Mammary epithelial cell (primary cell): ENCODE measurements at regions of chr1 and their contacts with region 1.

Region 1: GRCh38 chr1:234114648-234115307 is 210.3 kb downstream of the SLC35F3 start:
- DNase-seq: peak; percentile 61
- H3K4me3 ChIP-seq: peak overlapping the region; percentile 28 to 40 (median 33)
- H3K27ac ChIP-seq: peak overlapping the region; percentile 56
- H3K4me1 ChIP-seq: peaks cover 8% of the 10 kb centered on the region
- H3K27me3 ChIP-seq: no peaks in the 10 kb centered on the region
- CTCF ChIP-seq: peak; percentile 67

Region 2: DNA sequence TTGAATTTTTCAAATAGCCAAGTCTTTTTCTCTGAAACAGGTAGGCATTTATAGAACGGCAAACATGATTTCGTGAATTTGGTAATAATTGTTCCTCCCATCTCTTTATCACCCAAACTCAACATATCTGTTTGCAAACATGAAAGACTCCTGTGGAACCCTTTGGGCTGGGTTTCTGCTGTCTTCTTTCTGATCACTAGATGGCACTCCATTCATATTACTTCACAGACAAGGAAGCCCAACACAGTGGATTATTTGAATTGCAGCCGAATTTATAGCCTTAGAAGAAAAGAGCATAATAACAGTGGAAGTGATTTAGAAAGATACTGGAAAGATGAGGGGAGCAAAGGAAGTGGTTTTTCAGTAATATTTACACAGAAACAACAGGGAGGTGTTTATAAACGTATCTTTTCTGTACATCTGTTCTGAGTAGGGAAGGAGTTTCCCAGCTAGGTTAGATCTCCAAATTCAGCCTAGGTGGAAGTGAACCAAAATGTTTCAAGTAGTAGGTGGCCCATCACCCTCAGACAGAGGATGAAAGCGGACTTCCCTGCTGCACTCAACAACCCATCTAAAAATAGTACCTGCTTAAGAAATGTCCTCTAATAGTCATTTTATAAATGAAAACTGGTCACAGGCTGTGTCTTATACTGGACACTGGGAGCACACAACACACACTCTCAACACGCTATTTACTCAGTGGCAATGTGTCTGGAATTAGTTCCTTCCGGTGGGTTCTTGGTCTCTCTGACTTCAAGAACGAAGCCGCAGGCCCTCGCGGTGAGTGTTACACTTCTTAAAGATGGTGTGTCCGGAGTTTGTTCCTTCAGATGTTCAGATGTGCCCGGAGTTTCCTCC is 719.7 kb before region 1 on chr1:
- CTCF ChIA-PET with region 1: no interaction called
- dilution Hi-C with region 1: no loop called
- in situ Hi-C with region 1: no loop called
- intact Hi-C with region 1: loop called (anchors 1 kb)
- DNase-seq: peak; percentile 43
- H3K4me3 ChIP-seq: no peak overlapping the region
- H3K27ac ChIP-seq: no peak overlapping the region
- H3K4me1 ChIP-seq: no peaks in the 10 kb centered on the region
- H3K27me3 ChIP-seq: peaks cover 1% of the 10 kb centered on the region
- CTCF ChIP-seq: peak; percentile 83 to 89

Region 3: GRCh38 chr1:233982827-233983518 is 131.8 kb before region 1 on chr1:
- CTCF ChIA-PET with region 1: no interaction called
- dilution Hi-C with region 1: no loop called
- in situ Hi-C with region 1: no loop called
- intact Hi-C with region 1: no loop called
- DNase-seq: peak; percentile 69
- H3K4me3 ChIP-seq: no peak overlapping the region
- H3K27ac ChIP-seq: no peak overlapping the region
- H3K4me1 ChIP-seq: peaks cover 5% of the 10 kb centered on the region
- H3K27me3 ChIP-seq: no peaks in the 10 kb centered on the region
- CTCF ChIP-seq: no peak

Region 4: DNA sequence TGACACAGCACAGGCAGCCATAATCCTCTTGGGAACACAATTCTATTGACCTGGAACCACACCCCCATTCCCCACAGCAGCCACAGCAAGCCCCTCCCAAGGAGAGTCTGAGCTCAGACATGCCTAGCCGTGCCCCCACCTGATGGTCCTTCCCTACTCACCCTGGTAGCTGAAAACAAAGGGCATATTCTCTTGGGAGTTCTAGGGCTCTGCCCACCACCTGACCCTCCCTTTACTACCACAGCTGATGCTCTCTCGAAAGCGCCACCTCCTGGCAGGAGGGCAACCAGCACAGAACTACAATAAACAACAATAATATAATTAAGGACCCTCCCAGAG is 73.6 kb after region 1 on chr1:
- CTCF ChIA-PET with region 1: no interaction called
- dilution Hi-C with region 1: no loop called
- in situ Hi-C with region 1: no loop called
- intact Hi-C with region 1: loop called (anchors 1 kb)
- DNase-seq: peak; percentile 98
- H3K4me3 ChIP-seq: no peak overlapping the region
- H3K27ac ChIP-seq: peak overlapping the region; percentile 75
- H3K4me1 ChIP-seq: peaks cover 38% of the 10 kb centered on the region
- H3K27me3 ChIP-seq: no peaks in the 10 kb centered on the region
- CTCF ChIP-seq: peak; percentile 35 to 48

Region 5: DNA sequence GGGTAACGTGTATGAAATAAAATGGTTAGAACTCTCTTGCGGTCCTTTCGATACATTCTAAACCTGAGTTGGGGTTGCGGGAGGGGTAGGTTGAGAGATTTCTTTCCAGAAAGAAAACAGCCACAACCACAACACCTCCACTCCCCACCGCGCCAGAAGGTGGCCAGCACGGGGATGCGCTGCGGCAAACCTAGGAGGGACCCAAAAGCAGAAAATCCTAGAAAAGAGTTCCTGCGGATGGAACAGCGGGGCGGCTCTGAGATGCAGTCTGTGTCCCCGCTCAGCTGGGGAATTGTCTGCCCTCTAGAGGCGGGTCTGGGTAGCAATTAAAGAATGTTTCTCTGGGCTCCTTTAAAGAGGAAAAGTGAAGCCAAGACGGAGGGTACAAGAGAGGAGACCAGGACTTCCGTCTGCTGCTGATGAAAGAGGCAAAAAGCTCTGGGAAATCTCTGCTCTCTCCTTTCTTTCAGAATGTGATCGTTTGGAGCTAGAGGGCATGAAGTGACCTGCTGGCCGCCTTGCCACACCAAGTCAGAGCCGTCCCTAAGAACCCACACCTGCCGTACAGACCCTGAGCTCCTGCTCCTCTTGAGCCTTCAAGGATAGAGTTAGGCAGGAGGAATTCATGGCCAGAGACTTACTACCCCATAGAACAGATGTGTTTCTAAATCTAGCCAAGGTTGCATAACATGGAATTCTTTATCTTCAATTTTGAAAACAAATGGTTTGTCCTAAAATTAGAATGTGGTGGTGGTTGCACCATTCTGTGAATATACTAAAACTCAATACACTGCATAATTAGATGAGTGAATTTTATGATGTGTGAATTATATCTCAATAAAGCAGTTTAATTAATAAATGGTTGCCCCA is 212.0 kb after region 1 on chr1:
- CTCF ChIA-PET with region 1: interaction called, 7 read pairs
- dilution Hi-C with region 1: no loop called
- in situ Hi-C with region 1: no loop called
- intact Hi-C with region 1: loop called (anchors 1 kb)
- DNase-seq: peak; percentile 41
- H3K4me3 ChIP-seq: no peak overlapping the region
- H3K27ac ChIP-seq: no peak overlapping the region
- H3K4me1 ChIP-seq: no peaks in the 10 kb centered on the region
- H3K27me3 ChIP-seq: no peaks in the 10 kb centered on the region
- CTCF ChIP-seq: peak; percentile 81

Region 6: DNA sequence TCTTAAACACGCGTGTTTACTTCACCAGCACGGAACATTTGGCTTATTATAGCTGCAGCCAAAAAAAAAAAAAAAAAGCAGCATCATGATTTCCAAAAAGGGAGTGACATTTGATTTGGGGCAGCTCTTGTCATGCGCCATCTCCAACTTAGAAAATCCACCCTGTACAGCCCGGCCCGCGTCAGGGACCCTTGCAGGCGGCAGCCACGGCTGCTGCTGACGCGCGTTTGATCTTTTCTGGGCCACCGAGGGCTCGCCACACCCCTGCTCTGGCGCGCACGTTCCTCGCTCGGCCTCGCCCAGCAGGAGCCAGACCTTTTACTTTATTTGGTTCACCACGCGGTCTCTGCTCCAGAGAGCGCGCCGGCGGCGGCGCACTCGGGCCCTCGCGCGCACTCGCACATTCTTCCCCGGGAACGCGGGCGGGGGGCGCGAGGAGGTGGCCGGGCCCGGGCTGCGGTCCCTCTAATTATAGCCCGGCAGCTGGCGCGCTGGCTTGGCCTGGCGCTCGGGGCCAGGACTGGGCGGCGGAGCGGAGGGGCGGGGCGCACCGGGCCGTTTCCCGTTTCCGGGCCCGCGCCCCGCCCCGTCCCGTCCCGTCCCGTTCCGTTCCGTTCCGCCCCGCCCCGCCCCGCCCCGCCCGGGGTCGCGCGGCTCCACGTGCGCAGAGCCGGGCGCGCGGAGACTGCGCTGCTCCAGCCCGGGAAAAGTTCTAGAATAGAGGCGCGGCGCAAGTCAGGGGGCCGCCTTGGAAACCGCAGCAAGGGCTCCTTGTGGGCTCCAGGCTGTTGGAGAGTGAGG is 485.0 kb after region 1 on chr1:
- CTCF ChIA-PET with region 1: no interaction called
- dilution Hi-C with region 1: no loop called
- in situ Hi-C with region 1: no loop called
- intact Hi-C with region 1: loop called (anchors 5 kb)
- DNase-seq: peak; percentile 87
- H3K4me3 ChIP-seq: peak overlapping the region; percentile 53 to 60 (median 55)
- H3K27ac ChIP-seq: peak overlapping the region; percentile 88
- H3K4me1 ChIP-seq: peaks cover 42% of the 10 kb centered on the region
- H3K27me3 ChIP-seq: no peaks in the 10 kb centered on the region
- CTCF ChIP-seq: no peak

Region 7: GRCh38 chr1:234631721-234632125 is 516.9 kb after region 1 on chr1:
- CTCF ChIA-PET with region 1: no interaction called
- dilution Hi-C with region 1: no loop called
- in situ Hi-C with region 1: no loop called
- intact Hi-C with region 1: no loop called
- DNase-seq: peak; percentile 94
- H3K4me3 ChIP-seq: no peak overlapping the region
- H3K27ac ChIP-seq: peak overlapping the region; percentile 82
- H3K4me1 ChIP-seq: peaks cover 18% of the 10 kb centered on the region
- H3K27me3 ChIP-seq: no peaks in the 10 kb centered on the region
- CTCF ChIP-seq: no peak